ENCODE measurements at regions of chr4 and their contacts with region 1.

Region 1: GRCh38 chr4:145216535-145216934 is 36.1 kb upstream of the OTUD4 start:
- DNase-seq: peak; percentile 32
- CTCF ChIP-seq: peak; percentile 55

Region 2: GRCh38 chr4:145618932-145619638 is 402.6 kb after region 1 on chr4 and contains the start of gene MMAA:
- in situ Hi-C with region 1: loop called (anchors 25 kb)
- DNase-seq: peak; percentile 97
- CTCF ChIP-seq: peak; percentile 56

Region 3: GRCh38 chr4:146415829-146416228 is 1199.3 kb after region 1 on chr4:
- in situ Hi-C with region 1: no loop called
- DNase-seq: no peak
- CTCF ChIP-seq: no peak

Measured in GM13977 (cell line).